Caco-2 (cell line): ENCODE measurements at regions of chr14 and their contacts with region 1.

Region 1: DNA sequence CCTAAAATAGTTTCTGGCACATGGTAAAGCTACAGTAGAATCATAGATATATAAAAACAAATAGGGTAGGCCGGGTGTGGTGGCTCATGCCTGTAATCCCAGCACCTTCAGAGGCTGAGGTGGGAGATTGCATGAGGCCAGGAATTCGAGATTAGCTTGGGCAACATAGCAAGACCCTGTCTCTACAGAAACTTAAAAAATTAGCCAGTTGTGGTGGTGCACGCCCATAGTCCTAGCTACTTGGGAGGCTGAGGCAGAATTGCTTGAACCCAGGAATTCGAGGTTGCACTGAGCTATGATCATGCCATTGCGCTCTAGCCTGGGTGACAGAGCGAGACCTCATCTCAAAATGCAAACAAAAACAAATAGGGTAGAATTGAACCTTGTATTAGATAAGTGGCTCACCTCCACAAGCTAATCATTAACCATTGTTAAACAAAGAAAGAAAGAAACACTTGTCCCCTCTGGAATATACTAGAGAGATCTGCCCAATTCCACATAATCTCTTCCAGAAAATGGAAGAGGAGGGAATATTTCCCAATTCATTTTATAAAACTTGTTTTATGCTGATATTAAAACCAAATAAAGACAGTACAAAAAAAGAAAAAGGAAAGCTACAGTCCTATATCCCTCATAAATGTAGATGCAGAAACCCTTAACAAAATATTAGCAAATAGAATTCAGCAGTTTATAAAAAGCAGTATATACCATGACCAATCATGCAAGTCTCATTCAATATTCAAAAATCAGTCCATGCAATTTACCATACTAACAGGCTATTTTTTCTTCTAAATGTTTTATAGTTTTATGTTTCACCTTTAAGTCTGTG is 22.7 kb upstream of the DHRS2 start:
- DNase-seq: no peak
- H3K4me3 ChIP-seq: no peak overlapping the region
- H3K4me3 Mint-ChIP-seq: no peak overlapping the region
- H3K27ac Mint-ChIP-seq: no peak overlapping the region
- H3K4me1 ChIP-seq: peaks cover 23% of the 10 kb centered on the region
- H3K4me1 Mint-ChIP-seq: peaks cover 28% of the 10 kb centered on the region
- H3K27me3 ChIP-seq: no peaks in the 10 kb centered on the region
- H3K27me3 Mint-ChIP-seq: no peaks in the 10 kb centered on the region
- CTCF ChIP-seq: no peak

Region 2: GRCh38 chr14:23631702-23632460 is 18.4 kb after region 1 on chr14:
- CTCF ChIA-PET with region 1: interaction called, 10 read pairs
- POLR2A ChIA-PET with region 1: no interaction called
- intact Hi-C with region 1: no loop called
- DNase-seq: peak in 1 of 2 experiments; percentile 71
- H3K4me3 ChIP-seq: no peak overlapping the region
- H3K4me3 Mint-ChIP-seq: no peak overlapping the region
- H3K27ac Mint-ChIP-seq: no peak overlapping the region
- H3K4me1 ChIP-seq: no peaks in the 10 kb centered on the region
- H3K4me1 Mint-ChIP-seq: no peaks in the 10 kb centered on the region
- H3K27me3 ChIP-seq: no peaks in the 10 kb centered on the region
- H3K27me3 Mint-ChIP-seq: no peaks in the 10 kb centered on the region
- CTCF ChIP-seq: peak; percentile 83 to 89

Region 3: DNA sequence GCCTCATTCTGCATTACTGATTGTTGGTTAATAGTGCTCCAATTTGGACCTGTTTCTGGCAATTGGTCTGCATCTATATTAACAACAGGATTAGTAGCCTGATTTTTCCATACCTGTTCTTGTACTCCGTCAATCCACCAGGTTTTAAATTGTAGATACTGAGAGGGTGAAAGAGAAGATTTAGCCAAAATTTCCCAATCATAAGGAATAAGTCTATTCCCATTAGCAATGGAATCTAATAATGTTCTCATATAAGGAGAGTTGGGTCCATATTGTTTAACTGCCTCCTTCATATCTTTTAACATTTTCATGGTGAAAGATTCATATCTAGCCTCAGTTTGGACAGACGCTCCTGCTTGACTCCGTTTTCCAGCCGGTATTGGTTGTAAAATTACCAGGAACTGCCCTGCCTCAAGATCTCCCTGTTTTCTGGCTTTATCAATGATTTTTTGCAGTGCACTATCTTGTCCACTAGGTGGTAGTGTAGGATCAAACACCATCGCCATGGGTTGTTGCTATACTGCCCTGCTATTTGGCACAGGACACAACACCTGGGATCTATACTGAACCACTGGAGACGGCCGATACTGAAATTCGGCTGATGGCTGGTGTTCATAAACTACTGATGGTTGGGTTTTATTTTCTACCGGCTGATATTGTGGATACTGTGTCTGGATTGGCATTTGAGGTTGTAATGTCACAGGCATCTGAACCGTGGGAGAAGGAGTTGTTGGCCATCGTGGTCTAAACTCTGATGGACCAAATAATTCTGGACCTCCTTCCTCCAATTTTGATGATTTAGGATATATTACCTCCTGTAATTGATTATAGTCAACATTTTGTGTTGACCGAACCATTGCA is 400.4 kb after region 1 on chr14:
- CTCF ChIA-PET with region 1: no interaction called
- POLR2A ChIA-PET with region 1: no interaction called
- intact Hi-C with region 1: no loop called
- DNase-seq: peak; percentile 52 to 77
- H3K4me3 ChIP-seq: no peak overlapping the region
- H3K4me3 Mint-ChIP-seq: no peak overlapping the region
- H3K27ac Mint-ChIP-seq: no peak overlapping the region
- H3K4me1 ChIP-seq: no peaks in the 10 kb centered on the region
- H3K4me1 Mint-ChIP-seq: no peaks in the 10 kb centered on the region
- H3K27me3 ChIP-seq: no peaks in the 10 kb centered on the region
- H3K27me3 Mint-ChIP-seq: peaks cover 5% of the 10 kb centered on the region
- CTCF ChIP-seq: peak; percentile 66 to 83